ENCODE measurements at regions of chr15 and their contacts with region 1.

Region 1: DNA sequence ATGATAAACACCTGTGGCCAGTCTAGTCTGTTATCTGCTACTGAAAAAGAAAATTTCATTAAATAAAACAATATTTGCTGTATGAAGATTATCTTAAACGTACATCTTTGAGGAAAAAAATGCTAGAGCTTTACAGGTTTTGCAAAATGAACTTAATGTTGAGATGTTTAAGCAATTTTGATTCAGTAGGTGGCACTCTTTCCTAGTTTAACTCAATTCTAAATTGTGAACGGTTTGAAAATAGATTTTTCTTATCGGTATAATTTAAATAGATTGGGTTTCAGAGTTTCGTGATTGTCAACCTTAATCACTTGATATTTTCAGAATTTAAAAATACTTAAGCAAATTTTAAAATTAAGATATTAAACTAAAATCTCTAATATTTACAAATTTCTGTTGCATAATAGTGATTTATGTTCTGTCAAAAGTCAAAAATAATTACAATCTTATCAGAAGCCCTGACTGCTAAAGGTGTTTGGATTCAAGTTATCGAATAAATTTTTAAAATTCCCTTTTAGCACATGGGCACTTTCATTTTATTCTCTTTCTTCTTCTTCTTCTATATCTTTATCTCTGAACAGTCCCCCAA is 7.0 kb upstream of the RNF111 start:
- DNase-seq: no peak
- ATAC-seq: no peak
- H3K4me3 Mint-ChIP-seq: no peak overlapping the region
- H3K27ac Mint-ChIP-seq: no peak overlapping the region
- H3K4me1 Mint-ChIP-seq: peaks cover 39% of the 10 kb centered on the region
- H3K27me3 Mint-ChIP-seq: no peaks in the 10 kb centered on the region

Region 2: GRCh38 chr15:58805095-58805494 is 175.3 kb before region 1 on chr15:
- CTCF ChIA-PET with region 1: no interaction called
- POLR2A ChIA-PET with region 1: no interaction called
- intact Hi-C with region 1: no loop called
- DNase-seq: no peak
- ATAC-seq: no peak
- H3K4me3 Mint-ChIP-seq: no peak overlapping the region
- H3K27ac Mint-ChIP-seq: no peak overlapping the region
- H3K4me1 Mint-ChIP-seq: peaks cover 4% of the 10 kb centered on the region
- H3K27me3 Mint-ChIP-seq: no peaks in the 10 kb centered on the region

Region 3: DNA sequence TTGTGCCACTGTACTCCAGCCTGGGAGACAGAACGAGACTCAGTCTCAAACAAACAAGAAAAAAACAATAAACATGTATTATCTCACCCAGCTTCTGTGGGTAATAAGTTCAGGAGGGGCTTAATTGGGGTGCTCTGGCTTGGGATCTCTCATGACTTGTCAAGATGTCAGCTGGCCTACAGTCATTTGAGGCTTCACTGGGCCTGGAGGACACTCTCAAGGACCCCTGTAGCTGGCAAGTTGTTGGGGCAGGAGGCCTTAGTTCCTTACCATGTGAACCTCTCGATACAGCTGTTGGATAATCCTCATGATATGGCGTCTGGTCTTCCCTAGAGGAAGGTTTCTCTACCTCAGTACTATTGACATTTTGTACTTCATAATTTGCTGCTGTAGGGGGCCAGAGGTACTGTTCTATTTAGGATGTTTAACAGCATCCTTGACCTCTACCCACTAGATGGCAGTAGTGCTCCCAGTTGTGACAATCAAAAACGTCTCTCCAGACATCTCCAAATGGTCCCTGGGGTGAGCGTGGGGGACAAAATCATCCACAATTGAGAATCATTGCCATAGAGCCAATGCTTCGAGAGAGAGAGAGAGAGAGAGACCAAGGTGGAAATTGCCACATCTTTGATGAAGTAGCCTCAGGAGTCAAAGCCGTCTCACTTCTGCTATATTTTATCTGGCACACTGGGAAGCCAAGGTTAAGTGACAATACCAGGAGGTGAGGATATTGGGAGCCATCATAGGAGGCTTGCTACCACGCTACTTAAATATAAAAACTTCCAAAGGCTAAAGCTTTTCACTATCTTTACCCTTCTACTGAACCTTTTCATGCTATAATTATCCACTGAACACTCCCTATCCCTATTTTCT is 23.1 kb before region 1 on chr15:
- CTCF ChIA-PET with region 1: interaction called, 4 read pairs
- POLR2A ChIA-PET with region 1: no interaction called
- intact Hi-C with region 1: loop called in 1 of 2 experiments (anchors 1 kb)
- DNase-seq: peak; percentile 73
- ATAC-seq: peak; percentile 84
- H3K4me3 Mint-ChIP-seq: no peak overlapping the region
- H3K27ac Mint-ChIP-seq: no peak overlapping the region
- H3K4me1 Mint-ChIP-seq: peaks cover 10% of the 10 kb centered on the region
- H3K27me3 Mint-ChIP-seq: no peaks in the 10 kb centered on the region

Region 4: GRCh38 chr15:59017449-59017848 is 37.0 kb after region 1 on chr15:
- CTCF ChIA-PET with region 1: no interaction called
- POLR2A ChIA-PET with region 1: no interaction called
- intact Hi-C with region 1: loop called in 1 of 2 experiments (anchors 5 kb)
- DNase-seq: no peak
- ATAC-seq: no peak
- H3K4me3 Mint-ChIP-seq: no peak overlapping the region
- H3K27ac Mint-ChIP-seq: no peak overlapping the region
- H3K4me1 Mint-ChIP-seq: peaks cover 26% of the 10 kb centered on the region
- H3K27me3 Mint-ChIP-seq: no peaks in the 10 kb centered on the region

Region 5: DNA sequence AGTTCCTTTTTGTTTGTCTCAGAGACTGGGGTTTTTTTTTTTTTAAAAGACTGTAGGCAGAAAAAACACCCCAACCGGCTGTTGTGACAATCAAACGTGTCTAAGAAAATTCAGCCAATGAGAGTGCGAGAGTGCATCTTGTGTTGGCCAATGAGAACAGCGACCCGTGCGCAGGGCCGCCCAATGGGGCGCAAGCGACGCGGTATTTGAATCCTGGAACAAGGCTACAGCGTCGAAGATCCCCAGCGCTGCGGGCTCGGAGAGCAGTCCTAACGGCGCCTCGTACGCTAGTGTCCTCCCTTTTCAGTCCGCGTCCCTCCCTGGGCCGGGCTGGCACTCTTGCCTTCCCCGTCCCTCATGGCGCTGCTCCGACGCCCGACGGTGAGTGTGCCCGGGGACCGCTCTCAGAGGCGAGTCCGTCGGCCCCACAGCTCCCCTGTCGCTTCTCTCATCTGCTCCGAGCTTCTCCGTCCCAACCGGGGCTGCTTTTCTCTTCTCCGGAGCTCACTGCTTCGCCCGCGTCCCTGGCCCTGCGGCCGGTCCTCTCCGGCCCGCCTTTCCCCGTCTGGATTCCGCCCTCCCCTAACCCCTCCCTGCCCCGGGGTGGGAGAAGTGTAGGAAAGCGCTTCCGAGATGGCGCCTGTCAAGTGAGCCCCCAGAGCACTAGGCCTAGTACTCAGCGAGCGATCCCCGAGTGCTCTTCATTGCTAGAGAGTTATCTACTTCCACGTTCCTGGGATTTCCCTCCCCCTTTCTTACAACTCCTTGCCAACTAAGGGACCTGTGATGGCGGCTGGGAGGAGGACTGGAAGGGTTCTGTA is 124.7 kb after region 1 on chr15 and contains the start of gene CCNB2:
- CTCF ChIA-PET with region 1: interaction called, 4 read pairs
- POLR2A ChIA-PET with region 1: no interaction called
- intact Hi-C with region 1: loop called (anchors 1 to 10 kb)
- DNase-seq: peak; percentile 92
- ATAC-seq: peak; percentile 99
- H3K4me3 Mint-ChIP-seq: peak within 1 kb of the TSS; percentile 91
- H3K27ac Mint-ChIP-seq: peak within 1 kb of the TSS; percentile 91
- H3K4me1 Mint-ChIP-seq: peaks cover 11% of the 10 kb centered on the region
- H3K27me3 Mint-ChIP-seq: no peaks in the 10 kb centered on the region
- total RNA-seq, gene CCNB2: 68.0 to 75.3 TPM

Region 6: DNA sequence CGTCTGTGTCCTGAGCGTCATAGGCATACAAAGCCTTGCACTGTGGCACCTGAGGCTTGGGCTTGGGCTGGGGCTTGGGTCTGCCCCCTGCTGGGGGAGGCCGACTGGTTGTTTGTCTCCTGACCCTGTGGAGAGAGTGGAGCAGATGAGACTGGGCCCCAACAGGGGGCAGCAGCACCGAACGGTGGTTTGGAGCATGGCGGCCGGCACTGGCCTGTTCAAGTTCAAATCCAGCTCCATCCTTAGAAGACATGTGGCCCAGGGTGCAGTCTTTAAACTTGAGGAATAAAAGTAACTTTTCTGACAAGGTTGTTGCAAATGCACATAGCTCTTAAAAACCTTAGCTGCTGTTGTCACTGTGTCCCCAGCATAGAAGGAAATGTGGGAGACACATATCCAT is 157.8 kb after region 1 on chr15:
- CTCF ChIA-PET with region 1: no interaction called
- POLR2A ChIA-PET with region 1: no interaction called
- intact Hi-C with region 1: loop called (anchors 1 to 5 kb)
- DNase-seq: peak; percentile 76
- ATAC-seq: peak; percentile 86
- H3K4me3 Mint-ChIP-seq: no peak overlapping the region
- H3K27ac Mint-ChIP-seq: peak overlapping the region; percentile 12
- H3K4me1 Mint-ChIP-seq: peaks cover 23% of the 10 kb centered on the region
- H3K27me3 Mint-ChIP-seq: no peaks in the 10 kb centered on the region

Region 7: GRCh38 chr15:59247364-59247763 is 266.9 kb after region 1 on chr15:
- CTCF ChIA-PET with region 1: interaction called, 7 read pairs
- POLR2A ChIA-PET with region 1: no interaction called
- intact Hi-C with region 1: loop called in 1 of 2 experiments (anchors 5 kb)
- DNase-seq: peak; percentile 66
- ATAC-seq: peak; percentile 55
- H3K4me3 Mint-ChIP-seq: no peak overlapping the region
- H3K27ac Mint-ChIP-seq: no peak overlapping the region
- H3K4me1 Mint-ChIP-seq: peaks cover 3% of the 10 kb centered on the region
- H3K27me3 Mint-ChIP-seq: no peaks in the 10 kb centered on the region

Region 8: DNA sequence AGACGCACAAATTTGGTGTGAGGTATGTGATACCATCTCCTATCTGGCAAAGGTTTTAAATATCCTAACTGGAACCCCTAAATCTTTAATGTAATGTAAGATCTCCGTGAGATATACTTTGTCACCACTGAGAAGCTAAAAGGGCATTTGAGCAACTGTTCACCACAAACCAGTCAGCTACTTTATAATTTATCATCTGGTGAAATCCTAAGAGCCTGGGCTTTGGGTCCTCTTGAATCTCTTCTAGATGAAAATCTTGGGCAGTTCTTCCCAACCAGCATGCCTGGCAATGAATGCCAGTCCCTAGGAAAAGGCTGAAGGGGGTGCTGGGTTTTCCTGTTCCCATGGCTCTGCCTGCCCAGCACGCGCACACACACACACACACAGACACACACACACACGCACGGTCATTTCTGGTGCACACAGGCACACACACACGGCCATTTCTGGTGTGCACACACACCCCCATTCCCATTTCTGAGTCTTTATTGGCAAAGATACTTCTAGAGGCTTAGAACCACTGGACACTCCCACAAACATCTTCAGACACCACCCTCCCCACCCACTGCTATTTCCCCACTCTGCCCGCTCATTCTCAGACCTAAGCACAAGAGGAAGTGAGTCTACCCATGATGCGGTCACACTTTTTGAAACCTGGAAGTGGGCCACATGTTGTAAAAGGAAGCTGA is 319.6 kb after region 1 on chr15:
- CTCF ChIA-PET with region 1: no interaction called
- POLR2A ChIA-PET with region 1: no interaction called
- intact Hi-C with region 1: loop called in 1 of 2 experiments (anchors 5 kb)
- DNase-seq: peak; percentile 82
- ATAC-seq: peak; percentile 86
- H3K4me3 Mint-ChIP-seq: peak overlapping the region; percentile 38
- H3K27ac Mint-ChIP-seq: peak overlapping the region; percentile 48
- H3K4me1 Mint-ChIP-seq: peaks cover 39% of the 10 kb centered on the region
- H3K27me3 Mint-ChIP-seq: no peaks in the 10 kb centered on the region

Region 9: DNA sequence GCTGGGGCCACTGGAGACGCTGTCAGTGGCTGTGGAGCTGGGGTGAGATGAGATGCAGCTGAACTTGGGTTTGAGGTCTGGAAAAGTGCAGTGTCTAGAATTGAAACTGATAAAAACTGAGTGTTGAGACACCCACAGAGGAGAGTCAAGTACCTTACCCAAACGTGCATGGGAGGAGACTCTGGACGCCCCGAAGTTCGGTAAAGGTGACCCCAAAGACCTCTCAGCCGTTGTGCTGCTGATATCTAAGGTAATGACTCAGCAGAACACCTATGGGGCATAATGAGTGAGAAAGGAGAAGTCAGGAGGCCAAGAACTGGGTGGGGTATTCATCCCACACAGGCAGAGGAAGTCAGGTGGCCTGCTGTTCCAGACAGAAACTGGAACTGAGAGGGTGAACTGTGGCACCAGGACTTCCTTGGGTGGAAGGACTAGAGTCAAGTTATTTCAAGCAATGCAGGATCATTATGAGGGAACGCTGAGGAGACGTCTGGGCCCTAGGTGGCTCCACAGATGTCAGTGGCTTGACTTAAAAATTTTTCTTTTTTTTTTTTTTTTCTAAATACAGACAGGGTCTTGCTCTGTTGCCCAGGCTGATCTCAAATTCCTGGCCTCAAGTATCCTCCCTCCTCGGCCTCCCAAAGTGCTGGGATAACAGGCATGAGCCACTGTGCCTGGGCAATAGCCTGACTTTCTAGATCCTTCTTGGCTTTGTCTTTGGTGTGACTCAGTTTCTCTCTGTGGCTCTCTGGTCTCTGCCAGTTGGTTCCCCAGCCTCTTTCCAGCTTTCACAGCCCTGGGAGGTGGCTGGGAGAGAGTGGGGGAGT is 563.5 kb after region 1 on chr15:
- CTCF ChIA-PET with region 1: no interaction called
- POLR2A ChIA-PET with region 1: no interaction called
- intact Hi-C with region 1: no loop called
- DNase-seq: peak; percentile 29
- ATAC-seq: peak; percentile 64
- H3K4me3 Mint-ChIP-seq: peak overlapping the region; percentile 2
- H3K27ac Mint-ChIP-seq: peak overlapping the region; percentile 59
- H3K4me1 Mint-ChIP-seq: peaks cover 8% of the 10 kb centered on the region
- H3K27me3 Mint-ChIP-seq: peaks cover 11% of the 10 kb centered on the region

Measured in activated CD4-positive, alpha-beta T cell treated with anti-CD3 and anti-CD28 coated beads for 36 hours (primary cell).